ENCODE measurements at regions of chr1 and their contacts with region 1.

Region 1: GRCh38 chr1:235888119-235888643 is 21.5 kb upstream of the LYST start:
- DNase-seq: peak; percentile 78
- ATAC-seq: peak; percentile 88
- H3K4me3 Mint-ChIP-seq: peak overlapping the region; percentile 6
- H3K27ac Mint-ChIP-seq: peak overlapping the region; percentile 84
- H3K4me1 Mint-ChIP-seq: peaks cover 41% of the 10 kb centered on the region
- H3K27me3 Mint-ChIP-seq: no peaks in the 10 kb centered on the region

Region 2: GRCh38 chr1:235799264-235799663 is 88.9 kb before region 1 on chr1:
- CTCF ChIA-PET with region 1: no interaction called
- POLR2A ChIA-PET with region 1: no interaction called
- intact Hi-C with region 1: loop called in 1 of 2 experiments (anchors 1 kb)
- DNase-seq: no peak
- ATAC-seq: no peak
- H3K4me3 Mint-ChIP-seq: no peak overlapping the region
- H3K27ac Mint-ChIP-seq: no peak overlapping the region
- H3K4me1 Mint-ChIP-seq: peaks cover 7% of the 10 kb centered on the region
- H3K27me3 Mint-ChIP-seq: no peaks in the 10 kb centered on the region

Region 3: GRCh38 chr1:235873045-235873444 is 15.1 kb before region 1 on chr1:
- CTCF ChIA-PET with region 1: interaction called, 5 read pairs
- POLR2A ChIA-PET with region 1: interaction called, 14 read pairs
- intact Hi-C with region 1: loop called (anchors 1 kb)
- DNase-seq: peak; percentile 50
- ATAC-seq: peak; percentile 62
- H3K4me3 Mint-ChIP-seq: peak overlapping the region; percentile 57
- H3K27ac Mint-ChIP-seq: peak overlapping the region; percentile 98
- H3K4me1 Mint-ChIP-seq: peaks cover 69% of the 10 kb centered on the region
- H3K27me3 Mint-ChIP-seq: no peaks in the 10 kb centered on the region

Region 4: GRCh38 chr1:235910357-235911299 is 22.4 kb after region 1 on chr1:
- CTCF ChIA-PET with region 1: interaction called, 3 read pairs
- POLR2A ChIA-PET with region 1: no interaction called
- intact Hi-C with region 1: loop called (anchors 1 kb)
- DNase-seq: peak; percentile 74
- ATAC-seq: peak; percentile 92
- H3K4me3 Mint-ChIP-seq: no peak overlapping the region
- H3K27ac Mint-ChIP-seq: peak overlapping the region; percentile 53
- H3K4me1 Mint-ChIP-seq: peaks cover 32% of the 10 kb centered on the region
- H3K27me3 Mint-ChIP-seq: peaks cover 3% of the 10 kb centered on the region

Region 5: GRCh38 chr1:235917267-235917811 is 29.2 kb after region 1 on chr1:
- CTCF ChIA-PET with region 1: interaction called, 4 read pairs
- POLR2A ChIA-PET with region 1: interaction called, 6 read pairs
- intact Hi-C with region 1: loop called (anchors 1 kb)
- DNase-seq: peak; percentile 84
- ATAC-seq: peak; percentile 97
- H3K4me3 Mint-ChIP-seq: peak overlapping the region; percentile 2
- H3K27ac Mint-ChIP-seq: peak overlapping the region; percentile 75
- H3K4me1 Mint-ChIP-seq: peaks cover 34% of the 10 kb centered on the region
- H3K27me3 Mint-ChIP-seq: no peaks in the 10 kb centered on the region

Region 6: DNA sequence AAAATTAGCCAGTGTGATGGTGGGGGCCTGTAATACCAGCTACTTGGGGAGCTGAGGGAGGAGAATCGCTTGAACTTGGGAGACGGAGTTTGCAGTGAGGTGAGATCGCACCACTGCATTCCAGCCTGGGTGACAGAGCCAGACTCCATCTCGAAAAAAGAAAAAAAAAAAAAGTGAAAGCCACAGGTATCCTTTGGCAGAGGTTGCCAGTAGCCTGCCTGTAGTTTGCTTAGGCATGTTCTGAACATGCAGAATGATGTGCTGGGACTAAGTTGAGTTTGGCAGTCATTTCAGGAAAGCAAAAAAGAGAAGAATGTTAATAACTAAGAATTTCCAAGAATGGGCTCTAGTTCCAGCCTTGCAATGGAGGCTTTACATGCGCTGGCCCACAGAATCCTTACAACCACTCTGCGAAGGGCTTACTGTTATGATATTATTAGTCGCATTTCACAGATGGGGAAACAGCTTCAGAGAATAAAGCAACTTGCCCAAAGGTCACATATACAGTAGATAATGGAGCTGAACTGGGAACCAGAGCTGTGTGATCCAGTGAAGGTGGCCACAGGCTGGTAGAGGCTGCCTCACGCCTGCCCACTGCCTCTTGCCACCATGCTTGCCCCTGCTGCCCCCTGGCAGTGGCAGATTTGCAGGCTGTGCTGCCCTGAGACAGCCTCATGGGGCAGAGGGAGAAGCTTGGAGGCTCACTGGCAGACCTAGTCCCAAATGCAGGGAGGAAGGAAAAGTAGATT is 45.0 kb after region 1 on chr1:
- CTCF ChIA-PET with region 1: no interaction called
- POLR2A ChIA-PET with region 1: no interaction called
- intact Hi-C with region 1: no loop called
- DNase-seq: no peak
- ATAC-seq: no peak
- H3K4me3 Mint-ChIP-seq: no peak overlapping the region
- H3K27ac Mint-ChIP-seq: no peak overlapping the region
- H3K4me1 Mint-ChIP-seq: peaks cover 25% of the 10 kb centered on the region
- H3K27me3 Mint-ChIP-seq: peaks cover 2% of the 10 kb centered on the region

Region 7: GRCh38 chr1:235954306-235955283 is 66.4 kb after region 1 on chr1:
- CTCF ChIA-PET with region 1: no interaction called
- POLR2A ChIA-PET with region 1: interaction called, 3 read pairs
- intact Hi-C with region 1: loop called (anchors 1 kb)
- DNase-seq: peak; percentile 62
- ATAC-seq: peak; percentile 46
- H3K4me3 Mint-ChIP-seq: no peak overlapping the region
- H3K27ac Mint-ChIP-seq: no peak overlapping the region
- H3K4me1 Mint-ChIP-seq: peaks cover 34% of the 10 kb centered on the region
- H3K27me3 Mint-ChIP-seq: no peaks in the 10 kb centered on the region

Region 8: DNA sequence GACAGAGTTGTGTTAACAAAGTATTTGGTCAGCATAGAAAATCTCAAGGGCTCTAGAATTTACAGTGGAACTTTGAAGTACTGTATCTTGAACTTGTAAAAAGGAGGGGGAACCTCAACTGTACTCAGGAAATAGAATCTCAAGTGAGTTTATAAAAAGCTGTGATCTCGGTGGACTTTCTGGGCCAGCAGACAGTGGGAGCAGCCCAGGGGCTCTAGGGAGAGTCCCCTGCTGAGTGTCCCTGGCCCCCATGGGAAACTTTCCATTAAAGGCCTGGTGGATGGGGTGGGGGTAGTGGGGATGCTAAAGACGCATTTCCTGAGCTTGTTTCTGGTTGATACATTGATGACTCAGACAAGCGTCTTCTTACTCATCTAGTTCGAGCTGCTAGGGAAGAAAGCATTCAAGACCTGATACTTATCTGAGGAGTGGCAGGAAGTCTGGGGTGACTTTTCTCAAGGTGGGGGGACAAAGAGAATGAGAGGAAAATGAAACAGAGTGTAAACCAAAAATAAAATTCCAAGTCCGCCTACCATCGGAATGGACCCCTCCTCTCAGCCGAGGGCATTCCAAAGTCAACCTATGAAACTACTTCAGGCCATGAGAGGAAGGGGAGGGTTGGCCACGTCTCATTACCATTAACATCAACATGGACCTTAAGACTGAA is 111.2 kb after region 1 on chr1:
- CTCF ChIA-PET with region 1: no interaction called
- POLR2A ChIA-PET with region 1: no interaction called
- intact Hi-C with region 1: loop called (anchors 1 kb)
- DNase-seq: peak; percentile 76
- ATAC-seq: peak; percentile 85
- H3K4me3 Mint-ChIP-seq: peak overlapping the region; percentile 32
- H3K27ac Mint-ChIP-seq: peak overlapping the region; percentile 94
- H3K4me1 Mint-ChIP-seq: peaks cover 58% of the 10 kb centered on the region
- H3K27me3 Mint-ChIP-seq: no peaks in the 10 kb centered on the region